ENCODE measurements at regions of chr11 and their contacts with region 1.

Region 1: DNA sequence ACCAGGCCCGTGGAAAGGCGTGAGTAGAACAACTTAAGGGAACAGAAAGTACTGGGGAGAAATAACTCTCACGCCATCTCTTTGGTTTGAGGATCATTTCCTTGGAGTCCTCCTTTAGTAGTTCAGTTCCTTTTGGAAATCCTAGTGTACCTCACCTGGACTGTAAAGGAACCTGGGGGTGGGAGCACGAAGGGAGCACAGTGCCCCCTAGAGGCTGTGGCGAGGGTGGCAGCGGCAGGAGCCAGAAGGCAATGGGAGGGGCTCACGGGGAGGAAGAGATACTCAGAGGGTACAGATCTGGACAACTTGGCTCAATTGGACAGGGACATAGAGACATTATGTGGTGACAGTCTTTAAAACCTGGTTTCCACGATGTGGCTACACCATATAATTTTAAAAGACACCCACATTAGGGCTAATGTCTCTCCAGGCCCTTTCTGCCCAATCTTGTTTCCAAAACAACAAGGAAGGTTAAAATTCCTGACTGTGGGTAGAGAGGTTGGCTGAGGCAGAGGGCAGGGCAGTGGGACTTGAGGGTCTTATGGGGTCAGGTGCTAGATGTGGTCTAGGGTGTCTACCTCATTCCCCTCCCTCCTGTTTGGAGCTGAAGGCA is 87.0 kb downstream of the CSNK2A3 start:
- DNase-seq: peak; percentile 56
- H3K4me3 ChIP-seq: no peak overlapping the region
- H3K27ac ChIP-seq: peak overlapping the region; percentile 5
- H3K4me1 ChIP-seq: peaks cover 20% of the 10 kb centered on the region
- H3K27me3 ChIP-seq: no peaks in the 10 kb centered on the region
- CTCF ChIP-seq: peak; percentile 96 to 97

Region 2: GRCh38 chr11:10792398-10792975 is 473.6 kb before region 1 on chr11:
- CTCF ChIA-PET with region 1: interaction called, 3 read pairs
- dilution Hi-C with region 1: no loop called
- in situ Hi-C with region 1: loop called in 1 of 2 experiments (anchors 25 kb)
- intact Hi-C with region 1: loop called (anchors 5 kb)
- DNase-seq: peak; percentile 59
- H3K4me3 ChIP-seq: peak overlapping the region in 1 of 3 experiments; percentile 17
- H3K27ac ChIP-seq: no peak overlapping the region
- H3K4me1 ChIP-seq: peaks cover 7% of the 10 kb centered on the region
- H3K27me3 ChIP-seq: no peaks in the 10 kb centered on the region
- CTCF ChIP-seq: peak; percentile 87 to 95

Region 3: DNA sequence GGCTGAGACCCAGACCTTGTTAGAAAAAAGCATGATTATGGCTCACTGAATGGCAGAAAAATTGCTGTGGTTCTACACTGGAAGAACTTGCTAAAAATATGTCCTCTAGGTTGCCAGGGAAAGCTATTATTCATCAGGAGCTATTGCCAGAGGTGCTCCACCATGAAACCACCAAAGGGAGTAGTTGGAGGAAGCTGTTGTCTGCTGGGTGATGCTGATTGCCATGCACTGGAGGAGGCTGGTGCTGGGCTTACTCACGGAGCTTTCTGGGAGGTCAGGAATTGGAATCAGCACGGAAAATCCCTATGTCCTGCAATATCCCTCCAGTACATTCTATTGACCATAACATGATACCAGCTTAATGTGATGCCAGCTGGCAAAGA is 208.6 kb before region 1 on chr11:
- CTCF ChIA-PET with region 1: no interaction called
- dilution Hi-C with region 1: no loop called
- in situ Hi-C with region 1: loop called in 1 of 2 experiments (anchors 10 kb)
- intact Hi-C with region 1: no loop called
- DNase-seq: peak; percentile 39
- H3K4me3 ChIP-seq: no peak overlapping the region
- H3K27ac ChIP-seq: no peak overlapping the region
- H3K4me1 ChIP-seq: no peaks in the 10 kb centered on the region
- H3K27me3 ChIP-seq: no peaks in the 10 kb centered on the region
- CTCF ChIP-seq: no peak

Region 4: GRCh38 chr11:11171854-11172253 is 94.2 kb before region 1 on chr11:
- CTCF ChIA-PET with region 1: no interaction called
- dilution Hi-C with region 1: no loop called
- in situ Hi-C with region 1: no loop called
- intact Hi-C with region 1: loop called (anchors 5 kb)
- DNase-seq: no peak
- H3K4me3 ChIP-seq: no peak overlapping the region
- H3K27ac ChIP-seq: no peak overlapping the region
- H3K4me1 ChIP-seq: peaks cover 10% of the 10 kb centered on the region
- H3K27me3 ChIP-seq: no peaks in the 10 kb centered on the region
- CTCF ChIP-seq: no peak

Region 5: GRCh38 chr11:11407065-11407762 is 141.1 kb after region 1 on chr11:
- CTCF ChIA-PET with region 1: no interaction called
- dilution Hi-C with region 1: no loop called
- in situ Hi-C with region 1: no loop called
- intact Hi-C with region 1: no loop called
- DNase-seq: no peak
- H3K4me3 ChIP-seq: no peak overlapping the region
- H3K27ac ChIP-seq: no peak overlapping the region
- H3K4me1 ChIP-seq: peaks cover 19% of the 10 kb centered on the region
- H3K27me3 ChIP-seq: no peaks in the 10 kb centered on the region
- CTCF ChIP-seq: no peak

Region 6: GRCh38 chr11:11531131-11531908 is 265.2 kb after region 1 on chr11:
- CTCF ChIA-PET with region 1: no interaction called
- dilution Hi-C with region 1: no loop called
- in situ Hi-C with region 1: no loop called
- intact Hi-C with region 1: no loop called
- DNase-seq: no peak
- H3K4me3 ChIP-seq: no peak overlapping the region
- H3K27ac ChIP-seq: no peak overlapping the region
- H3K4me1 ChIP-seq: no peaks in the 10 kb centered on the region
- H3K27me3 ChIP-seq: no peaks in the 10 kb centered on the region
- CTCF ChIP-seq: no peak

Region 7: GRCh38 chr11:11659567-11660362 is 393.7 kb after region 1 on chr11:
- CTCF ChIA-PET with region 1: no interaction called
- dilution Hi-C with region 1: no loop called
- in situ Hi-C with region 1: no loop called
- intact Hi-C with region 1: loop called (anchors 10 kb)
- DNase-seq: no peak
- H3K4me3 ChIP-seq: no peak overlapping the region
- H3K27ac ChIP-seq: no peak overlapping the region
- H3K4me1 ChIP-seq: no peaks in the 10 kb centered on the region
- H3K27me3 ChIP-seq: peaks cover 5% of the 10 kb centered on the region
- CTCF ChIP-seq: peak; percentile 14 to 36

Measured in mammary epithelial cell (primary cell).